Activated CD8-positive, alpha-beta memory T cell treated with anti-CD3 and anti-CD28 coated beads, Interleukin-2, amount 10 ng/mL, durations not matched to agents 7 days and 5 days (primary cell): ENCODE measurements at regions of chr14 and their contacts with region 1.

Region 1: GRCh38 chr14:102316743-102317563 is 2.6 kb upstream of the ZNF839 start:
- DNase-seq: peak; percentile 95
- ATAC-seq: peak; percentile 72
- H3K4me3 Mint-ChIP-seq: peak overlapping the region; percentile 79
- H3K27ac Mint-ChIP-seq: peak overlapping the region; percentile 90
- H3K4me1 Mint-ChIP-seq: peaks cover 65% of the 10 kb centered on the region
- H3K27me3 Mint-ChIP-seq: no peaks in the 10 kb centered on the region

Region 2: GRCh38 chr14:101964297-101965144 is 352.4 kb before region 1 on chr14 and contains the start of gene DYNC1H1:
- CTCF ChIA-PET with region 1: interaction called, 15 read pairs
- DNase-seq: peak; percentile 92
- ATAC-seq: peak; percentile 86
- H3K4me3 Mint-ChIP-seq: peak within 1 kb of the TSS; percentile 88
- H3K27ac Mint-ChIP-seq: peak within 1 kb of the TSS; percentile 92
- H3K4me1 Mint-ChIP-seq: peaks cover 47% of the 10 kb centered on the region
- H3K27me3 Mint-ChIP-seq: peaks cover 2% of the 10 kb centered on the region
- total RNA-seq, gene DYNC1H1: 308 to 325 TPM

Region 3: DNA sequence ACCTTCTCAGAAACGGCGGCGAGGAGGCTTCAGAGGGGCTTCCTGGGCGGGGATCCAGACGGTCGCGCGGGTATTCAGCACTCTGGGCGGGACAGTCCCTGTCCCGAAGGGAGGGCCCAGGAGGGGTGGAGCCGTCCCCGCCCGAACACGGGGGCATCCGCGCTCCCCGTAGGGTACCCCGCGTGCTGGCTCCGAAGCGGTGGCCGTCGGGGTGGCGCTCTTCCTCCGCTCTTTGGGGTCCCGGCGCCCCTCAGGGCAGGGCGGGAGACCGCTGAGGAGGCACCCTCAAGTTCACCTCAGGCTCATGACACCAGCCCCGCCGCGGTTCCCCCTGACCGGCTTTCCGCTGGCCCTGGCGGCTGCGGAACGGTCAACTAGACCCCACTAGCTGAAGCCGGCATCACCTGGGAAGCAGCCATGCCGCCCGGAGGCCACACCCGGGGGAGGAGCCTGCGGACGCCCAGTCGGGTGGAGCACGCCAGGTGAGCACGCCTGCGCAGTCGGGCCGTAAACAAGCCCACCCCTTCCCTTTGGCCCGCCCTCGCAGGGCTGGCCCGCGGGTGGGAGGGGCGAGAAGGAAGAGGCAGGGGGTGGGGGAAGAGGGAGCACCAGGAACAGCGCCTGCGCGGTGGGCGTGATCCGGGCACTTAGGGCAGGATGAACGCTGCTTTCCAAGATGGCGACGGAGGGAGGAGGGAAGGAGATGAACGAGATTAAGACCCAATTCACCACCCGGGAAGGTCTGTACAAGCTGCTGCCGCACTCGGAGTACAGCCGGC is 177.5 kb before region 1 on chr14 and contains the start of gene WDR20:
- CTCF ChIA-PET with region 1: interaction called, 10 read pairs
- DNase-seq: peak; percentile 99
- ATAC-seq: peak; percentile 94
- H3K4me3 Mint-ChIP-seq: peak within 1 kb of the TSS; percentile 85
- H3K27ac Mint-ChIP-seq: peak within 1 kb of the TSS; percentile 93
- H3K4me1 Mint-ChIP-seq: peaks cover 24% of the 10 kb centered on the region
- H3K27me3 Mint-ChIP-seq: no peaks in the 10 kb centered on the region
- total RNA-seq, gene WDR20: 32.6 to 33.6 TPM

Region 4: GRCh38 chr14:102304611-102305509 is 12.1 kb before region 1 on chr14 and contains the start of gene MOK:
- CTCF ChIA-PET with region 1: interaction called, 63 read pairs
- DNase-seq: peak; percentile 98
- ATAC-seq: peak; percentile 95
- H3K4me3 Mint-ChIP-seq: peak within 1 kb of the TSS; percentile 89
- H3K27ac Mint-ChIP-seq: peak within 1 kb of the TSS; percentile 87
- H3K4me1 Mint-ChIP-seq: peaks cover 11% of the 10 kb centered on the region
- H3K27me3 Mint-ChIP-seq: peaks cover 8% of the 10 kb centered on the region
- total RNA-seq, gene MOK: 3.2 to 3.6 TPM

Region 5: GRCh38 chr14:102524466-102525218 is 207.7 kb after region 1 on chr14:
- CTCF ChIA-PET with region 1: interaction called, 24 read pairs
- DNase-seq: peak; percentile 99
- ATAC-seq: peak; percentile 99
- H3K4me3 Mint-ChIP-seq: peak overlapping the region; percentile 90
- H3K27ac Mint-ChIP-seq: peak overlapping the region; percentile 86
- H3K4me1 Mint-ChIP-seq: peaks cover 33% of the 10 kb centered on the region
- H3K27me3 Mint-ChIP-seq: no peaks in the 10 kb centered on the region